CD8-positive, alpha-beta T cell (primary cell): ENCODE measurements at regions of chr15 and their contacts with region 1.

Region 1: DNA sequence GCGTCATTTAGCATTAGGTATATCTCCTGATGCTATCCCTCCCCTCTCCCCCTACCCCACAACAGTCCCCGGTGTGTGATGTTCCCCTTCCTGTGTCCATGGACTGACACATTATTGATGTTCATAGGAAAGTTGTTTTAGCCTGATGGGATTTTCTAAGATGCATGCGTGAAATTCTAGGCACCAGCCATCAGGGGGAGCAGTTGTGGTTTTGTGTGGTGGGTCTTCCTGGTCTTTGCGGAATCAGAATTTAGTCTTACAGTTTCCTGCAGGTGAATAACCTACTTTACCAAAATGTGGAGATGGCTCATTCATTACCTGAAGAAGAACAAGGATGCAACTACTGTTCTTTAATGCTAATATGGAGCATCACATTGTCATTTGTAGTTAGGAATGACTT is 455.0 kb upstream of the THBS1 start:
- DNase-seq: peak in 7 of 9 experiments; percentile 10 to 62 (median 22)
- ATAC-seq: no peak
- H3K4me3 ChIP-seq: no peak overlapping the region
- H3K4me3 Mint-ChIP-seq: no peak overlapping the region
- H3K27ac ChIP-seq: no peak overlapping the region
- H3K27ac Mint-ChIP-seq: no peak overlapping the region
- H3K4me1 ChIP-seq: no peaks in the 10 kb centered on the region
- H3K4me1 Mint-ChIP-seq: peaks cover 3% of the 10 kb centered on the region
- H3K27me3 ChIP-seq: no peaks in the 10 kb centered on the region
- H3K27me3 Mint-ChIP-seq: peaks cover 20% of the 10 kb centered on the region
- CTCF ChIP-seq: peak; percentile 59

Region 2: DNA sequence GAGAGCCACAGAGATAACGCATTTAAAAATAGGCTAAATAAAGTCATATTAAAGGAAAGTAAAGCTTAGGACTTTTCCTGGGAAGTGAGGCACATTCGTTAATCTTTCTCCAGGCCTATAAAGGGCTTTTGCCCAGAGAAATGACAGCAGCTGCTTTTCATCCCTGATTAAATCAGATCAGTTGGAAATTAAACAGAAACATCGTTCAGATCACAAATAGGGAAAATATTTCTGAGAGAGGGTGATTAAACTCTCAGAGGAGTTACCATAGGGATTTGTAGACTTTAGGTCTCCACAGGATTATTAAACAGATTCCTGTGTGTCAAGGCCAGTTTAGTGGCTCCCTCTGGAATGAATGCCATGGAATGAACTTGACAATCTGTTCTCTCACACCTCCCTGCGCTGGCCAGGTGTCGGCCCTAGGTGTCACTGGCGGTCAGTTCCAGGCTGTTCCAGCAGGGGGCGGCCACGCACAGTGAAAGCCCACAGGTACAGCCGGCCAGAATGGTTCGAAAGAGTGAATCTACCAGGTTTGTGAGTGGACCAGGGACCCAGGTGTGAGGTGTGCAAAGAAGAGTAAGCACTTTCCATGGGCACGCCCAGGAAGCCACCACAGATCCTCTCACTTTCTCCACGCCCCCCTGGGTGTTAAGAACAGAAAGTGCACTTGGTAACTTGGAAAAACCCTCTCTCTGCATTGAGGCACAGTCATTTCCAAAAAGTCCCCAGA is 308.3 kb before region 1 on chr15:
- CTCF ChIA-PET with region 1: no interaction called
- POLR2A ChIA-PET with region 1: no interaction called
- intact Hi-C with region 1: loop called in 1 of 2 experiments (anchors 5 kb)
- DNase-seq: peak; percentile 69 to 90 (median 78)
- ATAC-seq: peak; percentile 96
- H3K4me3 ChIP-seq: no peak overlapping the region
- H3K4me3 Mint-ChIP-seq: no peak overlapping the region
- H3K27ac ChIP-seq: no peak overlapping the region
- H3K27ac Mint-ChIP-seq: no peak overlapping the region
- H3K4me1 ChIP-seq: peaks cover 3% of the 10 kb centered on the region
- H3K4me1 Mint-ChIP-seq: peaks cover 5% of the 10 kb centered on the region
- H3K27me3 ChIP-seq: no peaks in the 10 kb centered on the region
- H3K27me3 Mint-ChIP-seq: peaks cover 4% of the 10 kb centered on the region
- CTCF ChIP-seq: peak; percentile 98

Region 3: DNA sequence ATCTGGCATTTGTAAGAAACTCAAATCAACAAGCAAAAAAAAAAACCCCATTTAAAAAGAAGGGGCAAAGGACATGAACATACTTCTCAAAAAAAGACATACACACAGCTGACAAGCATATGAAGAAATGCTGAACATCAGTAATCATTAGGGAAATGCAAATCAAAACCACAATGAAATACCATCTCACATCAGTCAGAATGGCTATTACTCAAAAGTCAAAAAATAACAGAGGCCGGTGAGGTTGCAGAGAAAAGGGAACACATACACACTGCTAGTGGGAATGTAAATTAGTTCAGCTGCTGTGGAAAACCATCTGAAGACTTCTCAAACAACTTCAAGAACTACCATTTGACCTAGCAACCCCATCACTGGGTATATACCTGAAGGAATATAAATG is 255.6 kb after region 1 on chr15:
- CTCF ChIA-PET with region 1: no interaction called
- POLR2A ChIA-PET with region 1: no interaction called
- intact Hi-C with region 1: no loop called
- DNase-seq: no peak
- ATAC-seq: no peak
- H3K4me3 ChIP-seq: no peak overlapping the region
- H3K4me3 Mint-ChIP-seq: no peak overlapping the region
- H3K27ac ChIP-seq: no peak overlapping the region
- H3K27ac Mint-ChIP-seq: no peak overlapping the region
- H3K4me1 ChIP-seq: no peaks in the 10 kb centered on the region
- H3K4me1 Mint-ChIP-seq: no peaks in the 10 kb centered on the region
- H3K27me3 ChIP-seq: peaks cover 0 to 3% of the 10 kb centered on the region in 2 experiments
- H3K27me3 Mint-ChIP-seq: peaks cover 3% of the 10 kb centered on the region
- CTCF ChIP-seq: no peak

Region 4: DNA sequence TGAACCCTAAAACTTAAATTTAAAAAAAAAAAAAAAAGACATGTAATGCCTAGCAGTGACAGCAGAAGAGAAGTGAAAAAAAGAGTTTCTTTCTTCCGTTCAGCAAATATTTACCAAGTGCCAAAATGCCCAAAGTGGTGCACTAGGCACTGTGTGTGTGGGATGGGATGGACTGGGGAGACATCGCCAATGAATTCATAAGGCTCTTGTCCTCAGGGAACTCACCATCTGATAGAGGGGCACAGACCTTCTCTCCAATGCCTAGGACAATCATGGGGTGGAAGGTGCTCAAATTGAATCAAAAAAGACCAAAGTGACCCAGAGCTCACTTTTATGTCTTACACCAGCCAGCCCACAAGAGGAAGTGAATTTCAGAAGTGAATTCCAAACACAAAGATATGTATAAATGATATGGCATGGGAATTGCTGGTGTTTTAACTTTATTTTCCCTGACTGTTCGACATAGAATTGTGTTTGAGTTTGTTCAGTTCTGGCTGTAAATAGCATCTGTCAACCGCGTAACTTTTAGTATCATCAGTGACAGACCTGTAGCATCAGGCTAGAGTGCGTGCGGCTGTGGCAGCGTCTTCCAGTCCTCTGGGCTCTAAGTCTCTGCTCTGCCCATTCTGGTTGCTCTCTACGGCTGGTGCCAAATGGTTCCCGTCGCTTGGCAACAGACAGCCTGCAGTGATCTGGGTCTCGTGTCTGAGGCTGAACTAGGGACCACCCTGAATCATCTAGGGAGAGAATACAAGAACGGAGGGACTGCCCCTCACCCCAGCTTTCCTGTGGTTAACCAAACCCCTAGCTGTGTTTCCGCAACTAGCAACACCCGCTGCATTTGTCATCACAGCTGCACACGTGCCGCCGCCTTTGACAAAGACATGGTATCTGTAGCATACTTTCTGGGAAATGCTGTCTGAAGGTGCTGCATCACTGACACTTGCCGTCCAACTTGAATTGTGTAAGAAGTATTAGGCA is 300.9 kb after region 1 on chr15:
- CTCF ChIA-PET with region 1: no interaction called
- POLR2A ChIA-PET with region 1: no interaction called
- intact Hi-C with region 1: loop called in 1 of 2 experiments (anchors 5 kb)
- DNase-seq: peak; percentile 46 to 94 (median 78)
- ATAC-seq: peak; percentile 90
- H3K4me3 ChIP-seq: peak overlapping the region; percentile 10 to 13
- H3K4me3 Mint-ChIP-seq: peak overlapping the region; percentile 68
- H3K27ac ChIP-seq: no peak overlapping the region
- H3K27ac Mint-ChIP-seq: peak overlapping the region; percentile 76
- H3K4me1 ChIP-seq: peaks cover 26% of the 10 kb centered on the region
- H3K4me1 Mint-ChIP-seq: peaks cover 34% of the 10 kb centered on the region
- H3K27me3 ChIP-seq: peaks cover 0 to 4% of the 10 kb centered on the region in 2 experiments
- H3K27me3 Mint-ChIP-seq: peaks cover 9% of the 10 kb centered on the region
- CTCF ChIP-seq: no peak